Activated naive CD4-positive, alpha-beta T cell treated with anti-CD3 and anti-CD28 coated beads for 36 hours (primary cell): ENCODE measurements at regions of chr10 and their contacts with region 1.

Region 1: GRCh38 chr10:35195361-35196306 is 69.0 kb downstream of the CREM start:
- DNase-seq: peak; percentile 93
- H3K4me3 Mint-ChIP-seq: peak overlapping the region; percentile 81
- H3K27ac Mint-ChIP-seq: peak overlapping the region; percentile 98
- H3K4me1 Mint-ChIP-seq: peaks cover 35% of the 10 kb centered on the region
- H3K27me3 Mint-ChIP-seq: no peaks in the 10 kb centered on the region

Region 2: GRCh38 chr10:34299105-34299611 is 896.5 kb before region 1 on chr10:
- CTCF ChIA-PET with region 1: no interaction called
- intact Hi-C with region 1: loop called (anchors 10 kb)
- DNase-seq: no peak
- H3K4me3 Mint-ChIP-seq: no peak overlapping the region
- H3K27ac Mint-ChIP-seq: no peak overlapping the region
- H3K4me1 Mint-ChIP-seq: peaks cover 15% of the 10 kb centered on the region
- H3K27me3 Mint-ChIP-seq: peaks cover 18% of the 10 kb centered on the region

Region 3: GRCh38 chr10:35019041-35020024 is 176.3 kb before region 1 on chr10:
- CTCF ChIA-PET with region 1: interaction called, 4 read pairs
- intact Hi-C with region 1: loop called (anchors 5 kb)
- DNase-seq: no peak
- H3K4me3 Mint-ChIP-seq: no peak overlapping the region
- H3K27ac Mint-ChIP-seq: no peak overlapping the region
- H3K4me1 Mint-ChIP-seq: peaks cover 13% of the 10 kb centered on the region
- H3K27me3 Mint-ChIP-seq: no peaks in the 10 kb centered on the region

Region 4: GRCh38 chr10:35132727-35133126 is 62.9 kb before region 1 on chr10:
- CTCF ChIA-PET with region 1: interaction called, 124 read pairs
- intact Hi-C with region 1: loop called (anchors 1 kb)
- DNase-seq: no peak
- H3K4me3 Mint-ChIP-seq: peak overlapping the region; percentile 65
- H3K27ac Mint-ChIP-seq: peak overlapping the region; percentile 80
- H3K4me1 Mint-ChIP-seq: peaks cover 62% of the 10 kb centered on the region
- H3K27me3 Mint-ChIP-seq: no peaks in the 10 kb centered on the region

Region 5: GRCh38 chr10:35218339-35218955 is 22.8 kb after region 1 on chr10:
- CTCF ChIA-PET with region 1: interaction called, 66 read pairs
- intact Hi-C with region 1: loop called (anchors 1 kb)
- DNase-seq: peak; percentile 96
- H3K4me3 Mint-ChIP-seq: peak overlapping the region; percentile 47
- H3K27ac Mint-ChIP-seq: peak overlapping the region; percentile 74
- H3K4me1 Mint-ChIP-seq: peaks cover 32% of the 10 kb centered on the region
- H3K27me3 Mint-ChIP-seq: no peaks in the 10 kb centered on the region

Region 6: GRCh38 chr10:35355971-35356724 is 160.5 kb after region 1 on chr10:
- CTCF ChIA-PET with region 1: no interaction called
- intact Hi-C with region 1: loop called (anchors 1 kb)
- DNase-seq: peak; percentile 31
- H3K4me3 Mint-ChIP-seq: peak overlapping the region; percentile 8
- H3K27ac Mint-ChIP-seq: peak overlapping the region; percentile 68
- H3K4me1 Mint-ChIP-seq: peaks cover 71% of the 10 kb centered on the region
- H3K27me3 Mint-ChIP-seq: no peaks in the 10 kb centered on the region